Posterior vena cava (tissue), 2 donors: ENCODE measurements at regions of chr6 and their contacts with region 1.

Region 1: DNA sequence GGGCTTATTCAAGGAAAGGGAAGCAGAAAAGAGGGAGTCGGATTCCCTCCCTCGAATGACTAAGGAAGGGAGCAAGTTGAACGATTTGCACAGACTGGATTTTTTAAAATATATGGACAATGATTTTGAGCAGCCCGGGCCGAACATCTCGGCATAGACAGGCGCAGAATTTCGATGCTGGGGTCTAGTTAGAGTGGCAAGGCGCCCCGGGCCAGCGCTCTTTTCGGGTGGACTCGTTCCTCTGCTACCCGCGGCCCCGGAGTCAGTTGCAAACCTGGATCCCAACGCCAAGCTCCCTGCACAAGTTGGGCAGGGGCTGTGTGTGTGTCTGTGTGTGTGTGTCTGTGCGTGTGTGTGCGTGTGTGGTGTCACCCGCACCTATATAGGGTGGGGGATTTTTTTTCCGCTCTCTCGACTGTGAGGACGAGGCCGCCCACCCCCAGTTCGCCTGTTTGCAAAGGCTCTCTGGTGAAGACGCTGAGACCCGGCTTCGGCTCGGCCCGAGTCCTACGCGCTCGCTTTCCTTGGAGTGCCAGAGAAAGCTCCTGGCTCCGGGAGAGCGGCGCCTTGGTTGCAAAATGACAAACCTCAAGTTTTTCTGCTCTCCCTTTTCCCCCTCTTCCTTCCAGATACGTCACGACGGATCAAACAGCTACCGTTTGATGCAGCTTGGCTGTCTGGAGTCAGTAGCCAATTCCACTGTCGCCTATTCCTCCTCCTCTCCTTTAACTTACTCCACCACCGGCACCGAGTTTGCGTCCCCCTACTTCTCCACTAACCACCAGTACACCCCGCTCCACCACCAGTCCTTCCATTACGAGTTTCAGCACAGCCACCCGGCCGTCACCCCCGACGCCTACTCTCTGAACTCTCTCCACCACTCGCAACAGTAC is 1.4 kb downstream of the TFAP2D start:
- DNase-seq: no peak

Region 2: DNA sequence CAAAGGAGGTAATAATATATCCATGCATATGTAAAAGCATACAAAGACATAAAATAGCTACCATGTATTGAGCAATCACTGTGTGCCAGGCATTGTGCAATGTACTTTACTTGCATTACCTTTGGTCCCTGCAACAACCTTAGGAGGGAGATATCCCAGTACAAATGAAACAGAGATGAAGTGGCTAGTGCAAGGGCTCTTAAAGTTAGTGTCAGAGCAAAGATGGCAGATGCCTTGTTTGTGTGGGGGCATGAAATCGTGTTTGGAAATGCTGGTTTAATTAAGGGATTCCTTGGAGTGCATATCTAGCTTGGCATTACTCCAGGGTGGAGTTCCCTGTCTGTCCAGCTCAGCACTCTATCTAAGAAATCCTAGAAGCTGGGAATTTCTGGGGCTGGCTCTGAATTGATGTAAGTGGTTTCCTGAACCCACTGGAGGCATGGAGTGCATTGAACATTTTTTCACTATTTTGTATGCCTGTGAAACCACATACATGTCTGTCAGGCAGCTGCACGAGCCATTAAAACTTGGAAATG is 1657.0 kb after region 1 on chr6:
- intact Hi-C with region 1: loop called in 1 of 2 experiments (anchors 5 kb)
- DNase-seq: no peak